CD14-positive monocyte (primary cell): ENCODE measurements at regions of chr9 and their contacts with region 1.

Region 1: GRCh38 chr9:113187935-113188595 is 33.0 kb downstream of the FKBP15 start:
- DNase-seq: peak; percentile 94 to 98 (median 97)
- H3K4me3 ChIP-seq: peak overlapping the region; percentile 40 to 75 (median 70)
- H3K4me3 Mint-ChIP-seq: peak overlapping the region; percentile 69 to 86
- H3K27ac ChIP-seq: peak overlapping the region; percentile 82 to 92
- H3K27ac Mint-ChIP-seq: peak overlapping the region; percentile 95 to 99 (median 98)
- H3K4me1 ChIP-seq: peaks cover 42 to 56% of the 10 kb centered on the region in 2 donors
- H3K4me1 Mint-ChIP-seq: peaks cover 56% of the 10 kb centered on the region
- H3K27me3 ChIP-seq: no peaks in the 10 kb centered on the region
- H3K27me3 Mint-ChIP-seq: no peaks in the 10 kb centered on the region
- CTCF ChIP-seq: no peak

Region 2: DNA sequence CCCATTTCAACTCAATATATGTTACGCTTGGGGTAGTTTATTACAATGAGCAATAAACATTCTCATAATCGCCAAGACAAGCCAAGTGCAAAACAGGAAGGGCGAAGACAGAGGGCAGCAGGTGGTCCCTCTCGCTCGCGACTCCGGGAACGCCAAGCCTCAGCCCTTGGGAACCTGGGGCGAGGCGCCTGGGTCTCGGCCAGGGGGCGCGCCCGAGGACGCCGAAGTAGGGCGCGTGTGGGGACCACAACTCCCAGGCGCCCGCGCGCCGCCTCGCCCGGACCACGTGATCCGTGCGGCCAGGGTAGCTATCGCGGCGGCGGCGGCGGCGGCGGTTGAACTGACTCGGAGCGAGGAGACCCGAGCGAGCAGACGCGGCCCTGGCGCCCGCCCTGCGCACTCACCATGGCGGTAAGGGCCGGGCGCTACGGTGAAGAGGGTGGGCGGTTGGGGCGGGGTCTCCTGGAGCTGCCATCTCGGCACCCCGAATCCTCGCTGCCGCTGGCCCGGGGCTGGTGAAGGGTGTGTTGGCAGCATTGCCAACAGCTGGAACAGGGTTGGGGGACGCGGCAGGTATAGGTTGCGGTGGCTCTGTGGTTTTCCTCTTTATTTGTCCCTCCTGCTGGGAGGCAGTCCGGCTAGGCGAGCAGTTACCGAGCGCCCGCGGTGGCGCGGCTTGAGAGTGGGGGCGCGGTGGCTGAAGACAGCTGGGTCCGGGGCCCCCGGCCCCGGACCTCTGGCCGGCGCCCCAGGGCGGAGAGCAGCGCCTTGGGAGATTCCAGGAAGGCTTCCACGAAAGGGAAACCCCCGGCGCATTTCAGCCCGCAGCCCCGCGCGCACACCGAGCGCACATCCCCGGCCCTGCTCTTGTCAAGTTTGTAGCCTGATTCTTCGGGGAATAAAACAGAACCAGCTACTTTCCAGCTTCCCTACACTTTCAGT is 37.1 kb before region 1 on chr9 and contains the start of gene SLC31A2:
- intact Hi-C with region 1: loop called (anchors 5 kb)
- DNase-seq: peak; percentile 75 to 89 (median 88)
- H3K4me3 ChIP-seq: peak within 1 kb of the TSS; percentile 75 to 97 (median 93)
- H3K4me3 Mint-ChIP-seq: peak within 1 kb of the TSS; percentile 94 to 96
- H3K27ac ChIP-seq: peak within 1 kb of the TSS; percentile 96 to 98
- H3K27ac Mint-ChIP-seq: peak within 1 kb of the TSS; percentile 96 to 100 (median 99)
- H3K4me1 ChIP-seq: peaks cover 66 to 67% of the 10 kb centered on the region in 2 donors
- H3K4me1 Mint-ChIP-seq: peaks cover 66% of the 10 kb centered on the region
- H3K27me3 ChIP-seq: no peaks in the 10 kb centered on the region
- H3K27me3 Mint-ChIP-seq: peaks cover 1 to 5% (median 3%) of the 10 kb centered on the region in 3 donors
- CTCF ChIP-seq: peak; percentile 47
- polyA plus RNA-seq, gene SLC31A2: 82.9 to 247 (median 188) TPM

Region 3: DNA sequence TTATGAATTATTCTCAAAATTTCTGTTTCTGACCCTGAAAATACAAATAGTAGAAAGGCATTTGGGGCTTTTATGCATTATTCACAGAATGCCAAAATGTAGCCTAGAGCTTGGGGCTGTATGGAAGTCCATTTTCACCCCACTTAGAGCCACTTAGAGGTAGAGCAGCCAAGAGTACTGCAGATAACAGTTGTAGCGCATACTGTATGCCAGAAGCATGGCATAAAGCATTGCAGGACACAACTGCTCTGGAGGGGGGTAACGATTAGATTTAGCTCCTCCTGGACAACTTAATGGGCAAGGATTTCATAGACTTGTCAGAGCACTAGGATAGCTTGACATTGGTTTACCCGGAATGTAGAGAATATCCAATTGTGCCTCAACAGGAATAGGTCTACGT is 49.0 kb after region 1 on chr9:
- intact Hi-C with region 1: no loop called
- DNase-seq: no peak
- H3K4me3 ChIP-seq: no peak overlapping the region
- H3K4me3 Mint-ChIP-seq: no peak overlapping the region
- H3K27ac ChIP-seq: no peak overlapping the region
- H3K27ac Mint-ChIP-seq: peak overlapping the region in 1 of 7 donors; percentile 15
- H3K4me1 ChIP-seq: peaks cover 34 to 39% of the 10 kb centered on the region in 2 donors
- H3K4me1 Mint-ChIP-seq: peaks cover 43% of the 10 kb centered on the region
- H3K27me3 ChIP-seq: no peaks in the 10 kb centered on the region
- H3K27me3 Mint-ChIP-seq: peaks cover 0 to 3% (median 0%) of the 10 kb centered on the region in 3 donors
- CTCF ChIP-seq: no peak

Region 4: GRCh38 chr9:113687680-113688371 is 499.8 kb after region 1 on chr9:
- intact Hi-C with region 1: no loop called
- DNase-seq: no peak
- H3K4me3 ChIP-seq: no peak overlapping the region
- H3K4me3 Mint-ChIP-seq: peak overlapping the region in 1 of 2 donors; percentile 35
- H3K27ac ChIP-seq: no peak overlapping the region
- H3K27ac Mint-ChIP-seq: no peak overlapping the region
- H3K4me1 ChIP-seq: peaks cover 0 to 2% of the 10 kb centered on the region in 2 donors
- H3K4me1 Mint-ChIP-seq: peaks cover 12% of the 10 kb centered on the region
- H3K27me3 ChIP-seq: peaks cover 10 to 21% of the 10 kb centered on the region in 2 donors
- H3K27me3 Mint-ChIP-seq: peaks cover 18 to 31% (median 27%) of the 10 kb centered on the region in 3 donors
- CTCF ChIP-seq: no peak